BJ (cell line): ENCODE measurements at regions of chr6 and their contacts with region 1.

Region 1: DNA sequence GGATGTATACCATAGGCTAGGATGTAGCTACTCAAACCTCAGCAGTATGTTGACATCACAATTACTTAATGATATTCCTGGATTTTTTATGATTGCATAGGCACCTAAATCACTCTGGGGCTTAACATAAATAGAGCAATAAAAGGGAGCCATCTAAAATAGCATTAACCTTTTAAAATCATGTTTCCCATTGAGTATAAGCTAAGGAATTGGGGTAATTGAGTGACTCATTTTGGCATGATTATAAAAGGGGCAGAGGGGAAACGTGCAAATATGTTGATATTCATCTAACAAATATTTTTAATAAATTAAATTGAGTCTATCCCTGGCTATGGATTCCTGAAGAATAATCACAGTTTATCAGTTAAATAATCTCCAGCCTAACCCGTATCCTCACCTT is 74.0 kb upstream of the ADGRF1 start:
- DNase-seq: no peak
- H3K4me3 ChIP-seq: no peak overlapping the region
- H3K27me3 ChIP-seq: no peaks in the 10 kb centered on the region
- CTCF ChIP-seq: no peak

Region 2: GRCh38 chr6:47034919-47035318 is 81.2 kb before region 1 on chr6:
- CTCF ChIA-PET with region 1: no interaction called
- POLR2A ChIA-PET with region 1: no interaction called
- DNase-seq: peak; percentile 85
- H3K4me3 ChIP-seq: no peak overlapping the region
- H3K27me3 ChIP-seq: peaks cover 6% of the 10 kb centered on the region
- CTCF ChIP-seq: no peak

Region 3: GRCh38 chr6:47134476-47135189 is 18.5 kb after region 1 on chr6:
- CTCF ChIA-PET with region 1: no interaction called
- POLR2A ChIA-PET with region 1: interaction called, 13 read pairs
- DNase-seq: peak; percentile 59
- H3K4me3 ChIP-seq: no peak overlapping the region
- H3K27me3 ChIP-seq: no peaks in the 10 kb centered on the region
- CTCF ChIP-seq: no peak